Heart right ventricle (tissue), 16 donors: ENCODE measurements at regions of chr3 and their contacts with region 1.

Region 1: GRCh38 chr3:105366326-105367062 is at the start of gene ALCAM:
- DNase-seq: peak; percentile 81 to 87
- ATAC-seq: peak; percentile 90 to 98 (median 94)
- H3K4me3 ChIP-seq: peak within 1 kb of the TSS; percentile 36 to 77 (median 62)
- H3K27ac ChIP-seq: peak within 1 kb of the TSS in 7 of 10 donors; percentile 23 to 83 (median 45)
- H3K4me1 ChIP-seq: peaks cover 0 to 47% (median 34%) of the 10 kb centered on the region in 9 donors
- H3K27me3 ChIP-seq: peaks cover 0 to 6% (median 0%) of the 10 kb centered on the region in 7 donors
- CTCF ChIP-seq: peak in 6 of 9 donors; percentile 38 to 63 (median 53)
- total RNA-seq, gene ALCAM: 1.8 to 23.9 (median 3.6) TPM

Region 2: DNA sequence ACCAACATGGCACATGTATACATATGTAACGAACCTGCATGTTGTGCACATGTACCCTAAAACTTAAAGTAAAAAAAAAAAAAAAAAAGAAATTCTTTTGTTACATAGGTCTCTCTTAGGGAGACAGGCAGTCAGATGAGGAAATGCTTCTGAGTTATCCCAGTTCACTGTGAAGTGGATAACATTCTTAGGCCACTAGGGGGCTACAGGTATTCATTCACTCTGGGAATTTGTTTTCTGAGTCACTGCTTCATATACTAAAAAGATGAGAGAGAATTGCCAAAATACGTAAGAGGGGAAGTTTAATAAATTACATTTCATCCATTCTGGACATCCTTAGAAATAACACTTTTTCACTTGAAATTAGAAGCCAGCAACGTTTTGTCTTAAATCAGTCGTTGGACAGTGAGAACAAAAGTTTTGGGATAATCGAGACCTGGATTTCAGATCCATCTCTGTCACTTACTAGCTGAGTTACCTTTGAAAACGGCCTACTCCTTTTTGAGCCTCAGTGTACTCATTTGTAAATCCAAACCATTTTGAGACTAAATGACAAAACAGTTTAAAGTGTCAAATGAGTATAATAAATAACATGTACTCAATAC is 738.2 kb before region 1 on chr3:
- intact Hi-C with region 1: loop called in 4 of 10 experiments (anchors 5 to 10 kb)
- DNase-seq: no peak
- ATAC-seq: peak in 1 of 8 donors; percentile 51
- H3K4me3 ChIP-seq: no peak overlapping the region
- H3K27ac ChIP-seq: no peak overlapping the region
- H3K4me1 ChIP-seq: no peaks in the 10 kb centered on the region
- H3K27me3 ChIP-seq: no peaks in the 10 kb centered on the region
- CTCF ChIP-seq: peak in 8 of 9 donors; percentile 9 to 58 (median 45)

Region 3: GRCh38 chr3:104635872-104636580 is 730.5 kb before region 1 on chr3:
- intact Hi-C with region 1: loop called in 1 of 10 experiments (anchors 10 kb)
- DNase-seq: no peak
- ATAC-seq: no peak
- H3K4me3 ChIP-seq: no peak overlapping the region
- H3K27ac ChIP-seq: no peak overlapping the region
- H3K4me1 ChIP-seq: no peaks in the 10 kb centered on the region
- H3K27me3 ChIP-seq: no peaks in the 10 kb centered on the region
- CTCF ChIP-seq: no peak

Region 4: GRCh38 chr3:105260385-105260784 is 106.1 kb before region 1 on chr3:
- intact Hi-C with region 1: no loop called
- DNase-seq: no peak
- ATAC-seq: no peak
- H3K4me3 ChIP-seq: no peak overlapping the region
- H3K27ac ChIP-seq: no peak overlapping the region
- H3K4me1 ChIP-seq: no peaks in the 10 kb centered on the region
- H3K27me3 ChIP-seq: no peaks in the 10 kb centered on the region
- CTCF ChIP-seq: no peak

Region 5: DNA sequence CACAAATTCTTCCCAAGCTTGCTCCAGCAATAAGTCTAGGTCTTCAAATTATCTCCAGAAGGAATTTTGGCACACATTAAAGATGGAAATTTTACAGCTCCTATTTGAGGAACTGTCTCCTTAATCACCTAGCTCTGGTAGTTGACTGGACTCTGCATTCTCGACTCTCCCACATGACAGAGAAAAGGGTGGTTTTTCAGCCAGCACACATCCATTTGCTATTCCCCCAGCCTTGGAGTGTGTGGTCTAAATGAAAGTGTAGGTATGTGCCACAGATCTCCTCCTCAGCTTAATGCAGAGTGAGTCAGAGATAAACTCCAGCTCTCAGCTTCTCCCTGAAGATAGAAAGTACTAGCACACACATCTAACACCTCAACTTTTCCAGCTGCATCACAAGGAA is 62.0 kb before region 1 on chr3:
- intact Hi-C with region 1: no loop called
- DNase-seq: no peak
- ATAC-seq: no peak
- H3K4me3 ChIP-seq: no peak overlapping the region
- H3K27ac ChIP-seq: no peak overlapping the region
- H3K4me1 ChIP-seq: no peaks in the 10 kb centered on the region
- H3K27me3 ChIP-seq: no peaks in the 10 kb centered on the region
- CTCF ChIP-seq: no peak

Region 6: DNA sequence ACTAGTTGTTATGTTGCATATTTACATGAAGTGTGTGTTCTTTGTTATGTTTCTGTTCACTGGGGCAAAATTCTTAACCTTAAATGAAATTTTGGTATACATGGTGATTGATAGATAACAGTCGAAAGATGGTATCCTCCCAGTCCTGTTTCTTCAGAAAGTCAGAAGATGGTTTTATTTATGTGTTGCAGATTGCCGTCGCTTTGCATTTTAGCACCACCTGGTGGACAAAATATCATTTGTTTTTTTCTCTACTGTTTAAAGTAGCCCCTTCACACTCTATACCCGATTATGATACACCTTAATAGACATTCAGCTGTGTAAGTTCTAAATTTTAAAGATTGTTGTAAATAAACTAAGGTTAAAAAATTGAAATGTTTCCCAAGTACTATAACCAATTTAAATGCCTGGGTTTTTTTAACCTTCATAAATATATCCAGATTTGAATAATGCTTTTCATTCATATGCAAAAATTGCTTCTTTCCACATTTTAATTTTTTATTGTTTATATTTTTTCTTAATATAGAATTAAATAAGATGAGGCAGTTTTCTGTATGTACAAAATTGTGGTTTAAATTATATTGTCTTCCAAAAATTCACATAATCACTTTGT is 152.4 kb after region 1 on chr3:
- intact Hi-C with region 1: loop called in 1 of 10 experiments (anchors 5 kb)
- DNase-seq: no peak
- ATAC-seq: peak in 4 of 8 donors; percentile 28 to 57 (median 57)
- H3K4me3 ChIP-seq: no peak overlapping the region
- H3K27ac ChIP-seq: no peak overlapping the region
- H3K4me1 ChIP-seq: peaks cover 0 to 3% (median 0%) of the 10 kb centered on the region in 9 donors
- H3K27me3 ChIP-seq: no peaks in the 10 kb centered on the region
- CTCF ChIP-seq: peak; percentile 51 to 80 (median 75)